ENCODE measurements at regions of chr15 and their contacts with region 1.

Region 1: DNA sequence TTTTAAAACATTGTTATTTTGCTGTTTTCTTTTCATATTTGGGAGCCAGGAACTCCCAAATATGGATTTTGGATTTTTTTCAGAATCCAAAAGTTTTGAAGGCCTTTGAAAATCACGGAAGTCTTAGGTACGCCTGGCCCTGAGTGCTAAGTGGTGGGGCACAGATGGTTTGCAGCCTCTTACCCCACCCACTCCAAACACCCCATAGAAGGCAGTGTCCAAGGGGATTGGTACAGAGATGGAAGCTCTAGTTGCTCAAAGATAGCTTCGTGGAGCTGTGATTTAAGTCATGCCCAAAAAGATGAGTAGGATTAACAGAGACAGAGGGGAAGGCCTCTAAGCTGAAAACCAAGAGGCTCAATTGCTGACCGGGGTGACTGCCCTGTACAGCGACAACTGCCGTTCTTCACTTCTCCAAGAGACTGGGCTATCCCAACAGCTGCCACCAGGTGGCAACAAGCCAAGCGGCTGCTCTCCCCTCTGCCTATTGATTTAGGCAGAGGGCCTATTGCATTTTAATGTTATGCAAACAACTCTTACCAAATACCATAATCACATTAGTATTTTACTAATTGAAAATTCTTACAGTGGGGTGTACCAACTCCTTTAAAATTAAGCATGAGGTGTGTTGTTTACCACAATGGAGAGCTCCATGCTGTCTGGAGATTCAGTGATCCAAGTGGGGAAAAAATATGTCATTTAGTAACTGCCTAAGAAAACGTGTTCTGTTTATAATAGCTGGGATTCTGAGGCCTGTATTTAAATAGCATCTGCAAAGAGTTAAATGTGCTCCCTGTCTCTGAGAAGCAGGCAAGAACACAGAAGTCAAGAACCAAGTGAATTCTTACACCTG is 64.0 kb upstream of the C15orf61 start:
- DNase-seq: peak; percentile 75 to 81
- ATAC-seq: peak; percentile 96 to 99
- H3K4me3 ChIP-seq: no peak overlapping the region
- H3K27ac ChIP-seq: no peak overlapping the region
- H3K4me1 ChIP-seq: no peaks in the 10 kb centered on the region
- CTCF ChIP-seq: peak; percentile 94
- EP300 ChIP-seq: no peak
- POLR2A ChIP-seq: no peak
- RAD21 ChIP-seq: peak; percentile 76 to 81

Region 2: DNA sequence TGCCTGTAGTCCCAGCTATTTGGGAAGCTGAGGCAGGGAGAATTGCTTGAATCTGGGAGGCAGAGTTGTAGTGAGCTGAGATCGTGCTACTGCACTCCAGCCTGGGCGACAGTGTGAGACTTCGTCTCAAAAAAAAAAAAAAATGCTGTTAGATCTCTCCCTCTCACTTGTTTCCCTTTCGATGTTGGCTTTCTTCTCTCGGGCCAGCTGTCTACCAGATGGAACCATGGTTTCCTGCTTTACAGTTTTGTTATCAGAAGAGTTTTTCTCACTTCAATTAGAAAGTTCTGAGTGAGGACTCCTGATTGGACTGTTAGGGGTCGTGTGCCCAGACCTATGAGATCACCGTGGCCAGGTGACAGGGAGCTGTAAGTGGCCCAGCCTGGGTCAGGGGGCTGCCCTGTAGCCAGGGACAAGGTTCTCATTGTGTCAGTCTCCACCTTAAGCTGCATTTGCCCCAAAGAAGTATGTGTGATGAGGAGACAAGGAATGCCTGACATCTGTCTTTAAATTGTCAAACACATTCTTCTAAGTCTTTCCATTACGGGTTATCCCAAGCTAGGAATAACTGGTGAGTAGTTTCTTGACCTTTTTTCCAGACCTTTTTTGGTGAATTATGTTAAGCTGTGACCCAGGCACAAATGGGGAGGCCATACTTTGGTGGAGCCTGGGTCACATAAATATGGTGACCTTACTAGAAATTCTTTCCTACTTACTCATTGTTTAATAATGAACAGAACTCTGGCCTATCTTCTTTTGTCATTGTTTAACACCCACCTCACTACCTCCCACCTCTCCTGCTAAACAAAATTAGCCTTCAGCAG is 984.5 kb before region 1 on chr15:
- CTCF ChIA-PET with region 1: no interaction called
- POLR2A ChIA-PET with region 1: no interaction called
- DNase-seq: no peak
- ATAC-seq: peak in 1 of 2 experiments; percentile 29; a peak in 3 of 6 replicates
- H3K4me3 ChIP-seq: no peak overlapping the region
- H3K27ac ChIP-seq: peak overlapping the region in 1 of 2 experiments; percentile 34; a peak in 2 of 6 replicates
- H3K4me1 ChIP-seq: peaks cover 14% of the 10 kb centered on the region
- CTCF ChIP-seq: no peak
- EP300 ChIP-seq: no peak
- POLR2A ChIP-seq: no peak
- RAD21 ChIP-seq: no peak

Region 3: DNA sequence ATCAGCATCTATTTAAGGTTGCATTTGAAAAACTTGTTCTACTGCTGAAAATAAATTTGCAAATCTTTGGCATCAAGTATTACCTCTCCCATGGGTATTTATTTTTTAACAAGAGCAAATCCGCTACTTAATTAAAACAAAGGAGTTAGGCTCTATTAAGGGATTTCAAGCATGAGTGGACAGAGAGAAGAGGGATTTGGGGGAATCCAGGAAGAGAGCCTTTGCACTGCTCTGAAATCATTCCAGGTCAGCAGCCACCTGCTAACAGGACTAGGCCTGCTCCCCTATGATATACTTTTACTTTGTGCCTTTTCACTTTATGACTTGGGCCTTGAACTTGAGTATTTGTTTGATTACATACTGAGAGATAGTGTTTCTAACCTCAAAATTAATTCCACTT is 145.2 kb before region 1 on chr15:
- CTCF ChIA-PET with region 1: no interaction called
- POLR2A ChIA-PET with region 1: no interaction called
- DNase-seq: no peak
- ATAC-seq: no peak
- H3K4me3 ChIP-seq: no peak overlapping the region
- H3K27ac ChIP-seq: no peak overlapping the region
- H3K4me1 ChIP-seq: 0 out of 3 replicates have a peak, but pooled peaks cover 4% of the 10 kb centered on the region
- CTCF ChIP-seq: no peak
- EP300 ChIP-seq: no peak
- POLR2A ChIP-seq: no peak
- RAD21 ChIP-seq: no peak

Region 4: DNA sequence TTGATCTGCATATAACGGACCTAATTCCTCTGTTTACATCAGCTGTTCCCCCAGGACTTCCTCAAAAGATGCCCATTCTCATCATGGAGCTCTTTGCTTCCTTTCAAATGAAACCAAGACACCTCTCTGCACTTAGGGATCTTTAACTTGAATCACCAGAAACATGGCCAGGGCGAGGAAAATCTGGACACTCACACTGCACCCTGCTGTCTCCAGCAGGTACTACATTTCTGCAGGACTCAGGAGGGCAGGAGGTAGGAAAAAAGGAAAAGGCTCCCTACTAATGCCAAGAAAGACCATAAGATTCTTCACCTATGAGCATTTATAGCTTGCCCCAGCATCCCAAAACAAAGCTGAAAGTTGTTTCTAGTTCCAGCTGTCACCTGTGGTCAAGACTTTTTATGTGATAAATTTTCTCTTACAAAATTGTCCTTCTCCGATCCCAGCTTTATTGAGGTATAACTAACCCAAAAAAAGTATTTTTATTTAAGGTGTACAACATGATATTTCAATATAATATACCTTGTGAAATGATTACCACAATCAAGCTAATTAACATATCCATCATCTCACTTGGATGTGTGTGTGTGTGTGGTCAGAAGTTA is 23.3 kb before region 1 on chr15:
- CTCF ChIA-PET with region 1: interaction called, 11 read pairs
- POLR2A ChIA-PET with region 1: no interaction called
- DNase-seq: peak; percentile 69 to 82
- ATAC-seq: peak; percentile 89 to 96
- H3K4me3 ChIP-seq: no peak overlapping the region
- H3K27ac ChIP-seq: no peak overlapping the region
- H3K4me1 ChIP-seq: peaks cover 8% of the 10 kb centered on the region
- CTCF ChIP-seq: peak; percentile 71
- EP300 ChIP-seq: no peak
- POLR2A ChIP-seq: no peak
- RAD21 ChIP-seq: peak; percentile 78 to 91

Region 5: GRCh38 chr15:67472957-67473356 is 16.1 kb after region 1 on chr15:
- CTCF ChIA-PET with region 1: interaction called, 48 read pairs
- POLR2A ChIA-PET with region 1: no interaction called
- DNase-seq: no peak
- ATAC-seq: no peak
- H3K4me3 ChIP-seq: no peak overlapping the region
- H3K27ac ChIP-seq: no peak overlapping the region
- H3K4me1 ChIP-seq: no peaks in the 10 kb centered on the region
- CTCF ChIP-seq: no peak
- EP300 ChIP-seq: no peak
- POLR2A ChIP-seq: no peak
- RAD21 ChIP-seq: no peak

Region 6: DNA sequence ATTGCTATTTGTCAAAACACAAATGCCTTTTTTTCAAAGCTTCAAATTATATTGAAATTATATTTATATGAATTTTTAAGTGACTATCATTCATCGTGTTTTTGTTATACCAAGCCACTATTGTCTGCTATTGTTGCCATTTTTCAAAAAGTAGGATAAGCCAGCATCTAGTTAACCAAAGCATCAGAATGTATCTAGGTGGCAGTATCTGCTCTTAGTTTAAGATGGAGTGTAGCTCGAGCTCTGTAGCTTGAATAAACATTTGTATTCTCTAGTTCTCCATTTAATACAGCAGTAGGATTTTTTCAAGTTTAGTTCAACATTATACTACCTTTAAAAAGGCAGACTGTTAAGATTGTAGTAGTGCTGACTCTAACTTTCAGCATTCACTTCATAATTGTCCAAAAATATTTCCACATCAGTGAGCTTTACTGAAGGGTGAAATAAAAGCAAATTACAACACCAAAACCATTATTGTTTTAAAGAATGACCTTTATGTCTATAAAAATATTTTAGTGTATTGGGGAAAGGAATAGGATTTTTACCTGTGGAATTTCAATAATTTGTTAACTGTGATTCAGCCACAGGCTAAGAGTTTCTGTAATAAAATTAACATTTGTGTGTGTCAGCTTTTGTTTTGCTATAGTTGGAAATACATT is 44.4 kb after region 1 on chr15:
- CTCF ChIA-PET with region 1: interaction called, 18 read pairs
- POLR2A ChIA-PET with region 1: no interaction called
- DNase-seq: peak in 1 of 2 experiments; percentile 33
- ATAC-seq: peak; percentile 62 to 77; a peak in 4 of 6 replicates
- H3K4me3 ChIP-seq: no peak overlapping the region
- H3K27ac ChIP-seq: no peak overlapping the region
- H3K4me1 ChIP-seq: no peaks in the 10 kb centered on the region
- CTCF ChIP-seq: peak; percentile 56
- EP300 ChIP-seq: no peak
- POLR2A ChIP-seq: no peak
- RAD21 ChIP-seq: peak; percentile 50 to 65; a peak in 4 of 5 replicates

Region 7: GRCh38 chr15:67839929-67840748 is 383.2 kb after region 1 on chr15 and contains the start of gene RNU6-1:
- CTCF ChIA-PET with region 1: interaction called, 67 read pairs
- POLR2A ChIA-PET with region 1: no interaction called
- DNase-seq: peak; percentile 95 to 98
- ATAC-seq: peak; percentile 62 to 84
- H3K4me3 ChIP-seq: peak within 1 kb of the TSS; percentile 69
- H3K27ac ChIP-seq: peak within 1 kb of the TSS; percentile 87 to 92
- H3K4me1 ChIP-seq: peaks cover 13% of the 10 kb centered on the region
- CTCF ChIP-seq: no peak; the same call in 2 of the 3 replicates
- EP300 ChIP-seq: no peak
- POLR2A ChIP-seq: peak; percentile 83
- RAD21 ChIP-seq: peak in 1 of 2 experiments; percentile 1; a peak in 1 of 5 replicates
- polyA plus RNA-seq, gene RNU6-1: not detected in 2 replicates